ENCODE measurements at regions of chr12 and their contacts with region 1.

Region 1: DNA sequence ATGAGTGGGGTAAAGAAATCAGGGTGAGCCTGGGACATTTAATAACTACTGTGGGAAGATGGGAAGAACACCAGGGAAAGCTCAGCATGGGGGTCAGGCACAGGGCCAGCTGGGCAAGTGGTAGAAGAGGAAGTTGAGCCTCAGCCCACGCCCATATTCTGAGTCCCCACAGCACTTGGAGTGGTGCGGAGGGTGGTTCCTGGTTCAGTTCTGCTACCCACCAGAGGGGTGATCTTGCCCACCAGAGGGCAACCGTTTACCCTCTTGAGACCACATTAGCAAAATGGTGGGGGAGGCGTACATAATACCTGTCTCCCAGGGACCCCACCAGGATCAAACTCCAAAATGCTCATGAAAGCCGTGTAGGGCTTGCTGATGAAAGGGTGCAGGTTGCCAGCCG is 16.8 kb upstream of the ANKRD33 start:
- DNase-seq: no peak
- ATAC-seq: peak in 2 of 8 donors; percentile 30 to 36
- H3K4me3 ChIP-seq: no peak overlapping the region
- H3K27ac ChIP-seq: no peak overlapping the region
- H3K4me1 ChIP-seq: peaks cover 6 to 36% (median 20%) of the 10 kb centered on the region in 9 donors
- H3K27me3 ChIP-seq: peaks cover 0 to 41% (median 20%) of the 10 kb centered on the region in 7 donors
- CTCF ChIP-seq: no peak

Region 2: GRCh38 chr12:51225771-51226170 is 645.4 kb before region 1 on chr12:
- intact Hi-C with region 1: no loop called
- DNase-seq: no peak
- ATAC-seq: no peak
- H3K4me3 ChIP-seq: no peak overlapping the region
- H3K27ac ChIP-seq: no peak overlapping the region
- H3K4me1 ChIP-seq: no peaks in the 10 kb centered on the region
- H3K27me3 ChIP-seq: no peaks in the 10 kb centered on the region
- CTCF ChIP-seq: no peak

Region 3: DNA sequence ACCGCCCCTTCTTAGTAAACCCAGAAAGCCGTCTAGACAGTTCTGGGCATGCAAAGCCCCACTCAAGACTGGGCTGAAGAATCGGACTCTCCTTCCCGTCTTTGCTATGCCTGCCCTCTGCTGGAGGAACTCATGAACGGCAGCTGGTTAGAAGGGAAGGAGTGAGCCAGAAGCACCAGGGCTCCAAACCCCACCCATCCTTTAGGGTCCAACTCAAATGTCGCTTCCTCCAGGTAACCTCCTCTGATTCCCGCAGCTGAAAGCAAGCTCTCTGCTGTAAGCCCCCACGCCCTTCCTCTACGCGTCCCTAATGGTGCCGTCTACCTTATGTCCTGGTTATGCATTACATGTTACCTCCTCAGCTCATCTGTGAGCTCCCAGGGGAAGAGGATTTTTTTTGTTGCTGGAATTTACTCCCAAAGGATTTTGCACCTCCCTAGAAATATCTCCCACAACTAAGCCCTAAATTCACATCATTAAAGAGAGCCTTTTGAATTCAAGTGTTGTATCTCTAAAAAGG is 339.1 kb before region 1 on chr12:
- intact Hi-C with region 1: loop called in 1 of 10 experiments (anchors 5 kb)
- DNase-seq: peak; percentile 53 to 69
- ATAC-seq: peak; percentile 63 to 88 (median 84)
- H3K4me3 ChIP-seq: no peak overlapping the region
- H3K27ac ChIP-seq: no peak overlapping the region
- H3K4me1 ChIP-seq: no peaks in the 10 kb centered on the region
- H3K27me3 ChIP-seq: peaks cover 0 to 60% (median 44%) of the 10 kb centered on the region in 7 donors
- CTCF ChIP-seq: peak; percentile 75 to 92 (median 85)

Region 4: GRCh38 chr12:51773145-51773867 is 97.8 kb before region 1 on chr12:
- intact Hi-C with region 1: no loop called
- DNase-seq: no peak
- ATAC-seq: no peak
- H3K4me3 ChIP-seq: no peak overlapping the region
- H3K27ac ChIP-seq: no peak overlapping the region
- H3K4me1 ChIP-seq: peaks cover 0 to 6% (median 0%) of the 10 kb centered on the region in 9 donors
- H3K27me3 ChIP-seq: no peaks in the 10 kb centered on the region
- CTCF ChIP-seq: no peak

Region 5: GRCh38 chr12:51814311-51815088 is 56.6 kb before region 1 on chr12:
- intact Hi-C with region 1: loop called in 2 of 10 experiments (anchors 10 kb)
- DNase-seq: peak; percentile 73 to 88
- ATAC-seq: peak; percentile 77 to 94 (median 86)
- H3K4me3 ChIP-seq: peak overlapping the region; percentile 27 to 72 (median 66)
- H3K27ac ChIP-seq: peak overlapping the region; percentile 59 to 92 (median 88)
- H3K4me1 ChIP-seq: peaks cover 0 to 25% (median 3%) of the 10 kb centered on the region in 9 donors
- H3K27me3 ChIP-seq: peaks cover 0 to 37% (median 12%) of the 10 kb centered on the region in 7 donors
- CTCF ChIP-seq: peak; percentile 40 to 80 (median 58)

Region 6: GRCh38 chr12:51823875-51824565 is 47.1 kb before region 1 on chr12:
- intact Hi-C with region 1: loop called in 6 of 10 experiments (anchors 5 to 10 kb)
- DNase-seq: peak in 1 of 2 donors; percentile 28
- ATAC-seq: peak in 6 of 8 donors; percentile 23 to 59 (median 39)
- H3K4me3 ChIP-seq: no peak overlapping the region
- H3K27ac ChIP-seq: no peak overlapping the region
- H3K4me1 ChIP-seq: peaks cover 0 to 36% (median 0%) of the 10 kb centered on the region in 9 donors
- H3K27me3 ChIP-seq: peaks cover 0 to 25% (median 13%) of the 10 kb centered on the region in 7 donors
- CTCF ChIP-seq: peak; percentile 13 to 64 (median 55)

Region 7: GRCh38 chr12:51832354-51833107 is 38.6 kb before region 1 on chr12:
- intact Hi-C with region 1: loop called in 4 of 10 experiments (anchors 5 to 10 kb)
- DNase-seq: no peak
- ATAC-seq: peak in 2 of 8 donors; percentile 16 to 37
- H3K4me3 ChIP-seq: no peak overlapping the region
- H3K27ac ChIP-seq: no peak overlapping the region
- H3K4me1 ChIP-seq: peaks cover 0 to 44% (median 0%) of the 10 kb centered on the region in 9 donors
- H3K27me3 ChIP-seq: peaks cover 0 to 49% (median 13%) of the 10 kb centered on the region in 7 donors
- CTCF ChIP-seq: no peak

Region 8: DNA sequence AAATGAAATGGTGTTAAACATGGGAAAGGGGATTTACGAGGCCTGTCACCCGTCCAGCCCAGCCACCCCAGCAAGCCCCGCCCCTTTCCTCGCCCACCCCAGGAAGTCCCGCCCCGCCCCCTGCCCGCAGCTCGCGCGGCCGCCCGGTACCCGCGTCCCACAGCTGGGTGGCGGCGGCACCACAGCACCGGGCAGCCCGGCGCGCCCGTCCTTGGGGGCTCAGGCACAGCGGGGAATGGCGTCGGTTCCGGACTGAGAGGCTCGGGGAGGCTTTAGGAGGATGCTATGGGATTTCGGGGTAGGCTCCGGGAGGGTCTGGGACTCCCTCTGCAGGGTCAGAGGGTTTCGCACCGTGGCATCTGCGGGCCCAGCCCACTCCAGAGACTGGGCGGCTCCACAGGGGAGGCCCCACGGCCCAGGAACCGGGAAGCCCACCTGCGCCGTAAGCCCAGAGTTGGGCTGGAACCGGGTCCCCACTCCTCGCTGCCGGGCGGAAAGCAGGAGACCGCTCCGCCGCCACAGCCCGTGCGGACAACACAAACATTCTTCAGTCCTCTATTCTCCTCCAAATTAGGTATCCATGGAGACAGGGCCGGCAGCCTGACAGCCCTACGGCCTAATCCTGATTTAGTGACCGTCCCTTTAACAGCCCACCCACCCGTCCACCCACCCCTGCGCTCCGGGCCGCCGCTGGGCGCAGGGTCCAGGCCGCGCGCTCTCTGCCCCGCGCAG is 24.0 kb before region 1 on chr12:
- intact Hi-C with region 1: no loop called
- DNase-seq: peak; percentile 64 to 70
- ATAC-seq: peak; percentile 36 to 71 (median 53)
- H3K4me3 ChIP-seq: peak overlapping the region; percentile 43 to 72 (median 64)
- H3K27ac ChIP-seq: peak overlapping the region in 9 of 10 donors; percentile 60 to 87 (median 81)
- H3K4me1 ChIP-seq: peaks cover 9 to 55% (median 41%) of the 10 kb centered on the region in 9 donors
- H3K27me3 ChIP-seq: peaks cover 9 to 73% (median 55%) of the 10 kb centered on the region in 7 donors
- CTCF ChIP-seq: peak in 3 of 9 donors; percentile 15 to 25 (median 22)

Region 9: DNA sequence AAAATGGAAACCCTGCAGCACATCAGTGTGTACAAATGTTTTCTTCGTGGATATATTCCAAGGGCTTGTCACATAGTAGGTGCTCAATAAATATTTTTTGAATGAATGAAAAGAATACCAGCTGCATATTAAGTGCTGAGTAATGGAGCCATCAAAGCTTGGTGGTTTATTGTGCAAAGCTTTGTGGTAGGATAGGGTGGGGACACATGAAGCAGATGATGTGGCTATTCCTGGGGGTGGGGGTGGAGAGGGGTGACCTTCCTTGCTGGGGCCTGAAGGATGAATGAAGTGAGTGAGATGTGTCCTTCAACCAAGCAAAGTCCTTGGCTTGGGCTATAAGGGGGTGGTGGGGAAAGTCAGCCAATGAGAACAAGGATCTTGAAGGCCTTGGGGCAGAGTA is 424.5 kb after region 1 on chr12:
- intact Hi-C with region 1: no loop called
- DNase-seq: no peak
- ATAC-seq: no peak
- H3K4me3 ChIP-seq: no peak overlapping the region
- H3K27ac ChIP-seq: no peak overlapping the region
- H3K4me1 ChIP-seq: no peaks in the 10 kb centered on the region
- H3K27me3 ChIP-seq: peaks cover 0 to 66% (median 56%) of the 10 kb centered on the region in 7 donors
- CTCF ChIP-seq: no peak